ENCODE measurements at regions of chr6 and their contacts with region 1.

Region 1: DNA sequence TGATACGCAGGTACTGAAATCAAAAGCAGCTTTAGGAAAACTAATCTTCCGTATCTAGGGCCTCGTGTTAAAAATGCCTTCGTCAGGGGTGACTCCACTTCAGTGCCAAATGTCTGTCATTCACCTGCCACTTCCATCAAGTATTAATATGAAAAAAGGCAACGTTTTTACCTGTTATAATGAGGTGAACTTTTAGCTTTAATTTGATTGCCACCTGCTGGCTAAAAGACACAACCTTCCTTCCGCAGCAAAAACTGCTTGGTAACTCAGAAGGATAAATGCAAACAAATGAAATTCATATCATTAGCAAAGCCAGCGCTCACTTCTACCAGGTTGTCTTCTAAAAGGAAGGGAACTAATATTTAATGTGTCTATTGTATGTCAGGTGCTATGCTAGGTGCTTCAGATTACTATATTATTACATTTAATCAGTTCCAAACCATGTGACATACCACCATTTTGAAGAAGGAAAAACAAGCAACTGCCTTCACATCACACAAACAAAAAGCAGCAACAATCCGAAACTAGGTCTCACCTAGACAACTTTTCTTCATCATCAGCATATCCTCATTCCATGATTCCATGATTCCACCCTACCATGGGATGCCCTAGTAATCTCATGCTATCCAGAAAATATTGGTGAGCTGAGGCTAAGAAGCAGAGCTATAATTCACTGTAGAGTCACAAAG is 20.6 kb upstream of the ARHGAP18 start:
- DNase-seq: no peak

Region 2: DNA sequence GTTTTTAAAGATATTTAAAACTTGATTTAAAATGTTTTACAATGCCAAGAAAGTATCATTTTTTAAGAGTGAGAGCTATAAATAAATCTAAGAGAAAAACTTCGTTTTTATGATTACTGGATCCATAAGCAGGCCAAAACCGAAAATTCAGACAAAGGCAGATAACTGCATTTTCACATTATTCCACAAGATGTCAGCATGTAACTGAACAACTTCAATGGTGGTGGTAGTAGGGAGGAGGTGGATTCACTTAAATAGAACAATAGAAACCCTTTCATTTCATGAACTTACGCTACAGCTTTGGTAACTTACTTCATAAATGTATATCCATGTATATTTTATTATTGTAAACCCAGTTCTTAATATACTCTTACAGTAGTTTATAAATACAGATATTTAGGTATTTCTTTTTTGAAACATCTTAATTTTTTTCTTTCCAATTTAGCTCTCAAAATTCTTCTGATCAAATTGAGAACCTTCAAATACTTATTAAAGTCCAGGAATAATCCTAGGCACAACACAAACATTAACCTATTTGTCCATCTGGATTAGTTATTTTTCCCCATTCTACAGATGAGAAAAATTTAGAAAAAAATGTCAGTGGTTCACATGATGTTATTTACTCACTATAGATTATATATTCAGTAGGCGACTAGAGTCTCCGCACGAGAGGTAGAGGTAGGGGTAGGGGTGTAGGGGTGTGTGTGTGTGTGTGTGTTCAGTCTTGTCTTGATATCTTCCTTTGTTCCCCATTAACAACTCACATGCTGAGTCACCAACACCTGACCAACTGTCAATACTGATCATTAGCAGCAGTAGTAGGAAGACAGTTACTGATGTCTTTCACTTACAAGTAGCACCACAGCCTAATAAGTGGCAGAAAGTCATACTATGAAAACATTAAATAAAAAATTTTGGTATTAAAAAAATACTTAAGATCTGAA is 132.1 kb before region 1 on chr6:
- intact Hi-C with region 1: loop called (anchors 5 kb)
- DNase-seq: no peak